ENCODE measurements at regions of chr1 and their contacts with region 1.

Region 1: DNA sequence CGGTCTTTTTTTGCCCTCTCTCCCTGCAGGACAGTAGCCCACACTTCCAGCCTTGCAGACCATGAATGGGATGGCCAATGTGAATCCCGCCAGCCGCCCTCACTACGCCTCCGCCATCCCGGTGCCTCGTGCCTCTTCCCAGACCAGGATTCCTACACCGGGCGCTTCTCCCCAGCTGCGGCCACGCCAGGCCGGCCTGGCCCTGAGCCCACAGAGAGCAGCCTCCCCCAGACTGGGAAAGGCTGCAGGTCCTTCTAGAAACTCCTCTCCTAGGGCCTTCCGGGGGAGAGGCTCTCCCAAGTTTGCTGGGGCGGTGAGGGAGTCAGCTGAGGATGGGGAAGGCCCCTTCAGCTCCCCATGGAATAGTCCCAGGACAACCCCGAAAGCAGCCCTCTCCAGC is 83.9 kb downstream of the NAV1 start:
- DNase-seq: no peak
- ATAC-seq: no peak
- H3K4me3 ChIP-seq: no peak overlapping the region
- H3K27ac ChIP-seq: no peak overlapping the region
- H3K4me1 ChIP-seq: no peaks in the 10 kb centered on the region; the same call in 1 of the 2 replicates
- H3K27me3 ChIP-seq: no peaks in the 10 kb centered on the region
- CTCF ChIP-seq: no peak

Region 2: GRCh38 chr1:201653233-201653632 is 30.4 kb after region 1 on chr1:
- CTCF ChIA-PET with region 1: no interaction called
- POLR2A ChIA-PET with region 1: interaction called, 11 read pairs
- in situ Hi-C with region 1: no loop called
- intact Hi-C with region 1: no loop called
- DNase-seq: no peak
- ATAC-seq: no peak
- H3K4me3 ChIP-seq: no peak overlapping the region
- H3K27ac ChIP-seq: no peak overlapping the region
- H3K4me1 ChIP-seq: peaks cover 6% of the 10 kb centered on the region; the same call in 1 of the 2 replicates
- H3K27me3 ChIP-seq: no peaks in the 10 kb centered on the region; the same call in 1 of the 2 replicates
- CTCF ChIP-seq: no peak

Measured in Panc1 (cell line).